Activated B cell treated with CpG ODN at 0.5 μM for 24 hours (primary cell): ENCODE measurements at regions of chr3 and their contacts with region 1.

Region 1: GRCh38 chr3:98817547-98818041 is 54.5 kb downstream of the ST3GAL6 start:
- DNase-seq: no peak
- ATAC-seq: peak; percentile 68
- H3K4me3 Mint-ChIP-seq: no peak overlapping the region
- H3K27ac Mint-ChIP-seq: no peak overlapping the region
- H3K4me1 Mint-ChIP-seq: no peaks in the 10 kb centered on the region
- H3K27me3 Mint-ChIP-seq: no peaks in the 10 kb centered on the region
- CTCF ChIP-seq: peak; percentile 20

Region 2: DNA sequence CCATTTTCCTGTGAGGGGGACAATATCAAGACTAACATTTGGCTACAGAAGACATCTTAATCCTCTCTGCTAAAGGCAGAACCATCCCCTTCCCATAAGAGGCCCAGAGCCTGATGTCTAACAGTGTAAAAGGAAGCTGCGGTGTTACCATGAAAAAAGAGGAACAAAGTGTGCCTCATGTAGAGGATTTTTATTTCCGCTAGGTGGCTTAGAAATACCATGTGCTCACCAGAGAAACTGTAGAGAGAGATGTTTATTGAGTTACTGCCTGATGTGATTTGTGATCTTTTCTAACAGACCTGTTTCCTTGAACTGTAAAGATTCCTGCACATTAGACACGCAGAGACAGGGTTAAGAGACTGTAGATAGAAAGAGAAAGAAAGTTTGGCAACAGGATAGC is 629.0 kb before region 1 on chr3:
- CTCF ChIA-PET with region 1: no interaction called
- POLR2A ChIA-PET with region 1: no interaction called
- intact Hi-C with region 1: loop called (anchors 5 kb)
- DNase-seq: no peak
- ATAC-seq: peak; percentile 80
- H3K4me3 Mint-ChIP-seq: no peak overlapping the region
- H3K27ac Mint-ChIP-seq: no peak overlapping the region
- H3K4me1 Mint-ChIP-seq: peaks cover 2% of the 10 kb centered on the region
- H3K27me3 Mint-ChIP-seq: no peaks in the 10 kb centered on the region
- CTCF ChIP-seq: no peak

Region 3: DNA sequence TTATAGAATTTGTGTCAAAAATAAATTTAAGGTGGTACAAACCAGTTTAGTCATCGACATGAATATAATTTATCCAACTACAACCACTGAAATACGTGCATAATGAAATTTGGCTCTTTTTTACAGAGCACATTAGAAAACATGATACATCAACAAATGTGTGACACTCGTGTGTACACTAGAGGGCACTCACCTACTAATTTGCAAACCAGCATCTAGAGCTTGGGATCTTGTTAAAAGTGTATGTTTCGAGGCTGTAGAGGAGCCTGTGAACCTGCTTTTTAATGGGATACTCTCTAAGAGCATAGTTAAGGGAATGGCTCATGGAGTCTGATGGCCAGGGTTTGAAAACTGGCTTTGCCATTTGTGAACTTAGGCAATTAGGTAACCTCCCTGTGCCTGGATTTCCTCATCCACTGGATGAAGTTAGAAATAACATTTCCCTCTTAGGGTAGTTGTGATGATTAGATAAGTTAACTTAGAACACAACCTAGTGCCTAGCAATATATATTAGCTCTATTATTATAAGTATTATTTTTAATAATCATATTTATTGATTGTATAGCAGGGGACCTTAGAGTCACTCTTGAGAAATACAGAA is 215.4 kb before region 1 on chr3:
- CTCF ChIA-PET with region 1: interaction called, 17 read pairs
- POLR2A ChIA-PET with region 1: no interaction called
- intact Hi-C with region 1: loop called (anchors 1 kb)
- DNase-seq: no peak
- ATAC-seq: peak; percentile 40
- H3K4me3 Mint-ChIP-seq: no peak overlapping the region
- H3K27ac Mint-ChIP-seq: no peak overlapping the region
- H3K4me1 Mint-ChIP-seq: peaks cover under 1% of the 10 kb centered on the region
- H3K27me3 Mint-ChIP-seq: peaks cover 9% of the 10 kb centered on the region
- CTCF ChIP-seq: peak; percentile 22

Region 4: DNA sequence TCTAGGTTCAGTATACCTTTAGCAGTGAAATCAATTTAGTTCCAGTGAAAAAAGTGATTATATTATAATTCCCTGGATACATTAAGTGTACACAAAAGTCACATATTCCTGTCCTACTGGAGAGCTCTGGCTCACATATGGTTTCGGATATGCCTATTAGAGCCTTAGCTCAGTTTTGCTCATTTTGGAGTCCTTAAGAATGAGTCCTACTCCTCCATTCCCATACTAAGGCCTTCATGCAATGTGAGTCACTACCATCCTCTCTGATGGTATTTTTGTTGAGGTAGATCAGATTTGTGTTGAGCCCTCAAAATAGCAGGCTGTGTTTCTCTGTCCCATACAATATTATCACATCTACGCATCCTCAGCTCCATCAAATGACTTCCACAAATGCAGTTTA is 526.6 kb after region 1 on chr3:
- CTCF ChIA-PET with region 1: no interaction called
- POLR2A ChIA-PET with region 1: no interaction called
- intact Hi-C with region 1: loop called (anchors 5 kb)
- DNase-seq: no peak
- ATAC-seq: no peak
- H3K4me3 Mint-ChIP-seq: no peak overlapping the region
- H3K27ac Mint-ChIP-seq: no peak overlapping the region
- H3K4me1 Mint-ChIP-seq: no peaks in the 10 kb centered on the region
- H3K27me3 Mint-ChIP-seq: no peaks in the 10 kb centered on the region
- CTCF ChIP-seq: no peak

Region 5: DNA sequence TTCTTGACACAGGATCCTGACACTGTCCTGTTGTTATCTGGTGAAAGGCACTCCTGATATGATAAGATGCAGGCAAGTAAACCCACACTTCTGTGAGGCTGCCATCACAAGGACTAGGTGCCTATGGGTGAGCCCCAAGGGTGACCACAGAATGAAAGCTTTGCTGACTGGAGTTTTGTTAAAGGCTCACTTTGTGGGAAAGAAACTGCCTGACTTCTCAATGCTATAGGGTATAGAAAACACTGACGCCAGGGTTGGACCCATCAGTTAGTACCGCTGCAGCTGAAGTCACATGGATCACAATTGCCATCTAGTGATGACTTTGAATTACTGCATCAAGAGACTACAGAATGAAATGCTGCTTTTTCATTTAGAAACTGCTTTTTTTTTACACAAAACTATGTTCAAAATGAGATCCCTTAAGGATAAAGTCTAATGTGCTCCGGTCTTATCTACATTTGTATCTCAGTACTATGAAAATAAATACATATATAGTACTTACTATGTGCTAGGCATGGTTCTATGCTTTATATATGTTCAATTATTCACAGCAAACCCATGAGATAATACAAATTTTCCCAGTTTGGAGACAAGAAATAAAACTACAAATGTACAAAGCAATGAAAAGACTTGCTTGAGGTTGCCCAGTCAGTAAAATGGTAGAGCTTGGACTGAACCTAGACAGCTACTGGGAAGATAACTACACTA is 935.8 kb after region 1 on chr3:
- CTCF ChIA-PET with region 1: interaction called, 22 read pairs
- POLR2A ChIA-PET with region 1: no interaction called
- intact Hi-C with region 1: loop called (anchors 1 kb)
- DNase-seq: no peak
- ATAC-seq: no peak
- H3K4me3 Mint-ChIP-seq: no peak overlapping the region
- H3K27ac Mint-ChIP-seq: no peak overlapping the region
- H3K4me1 Mint-ChIP-seq: no peaks in the 10 kb centered on the region
- H3K27me3 Mint-ChIP-seq: peaks cover 8% of the 10 kb centered on the region
- CTCF ChIP-seq: no peak